Heart left ventricle (tissue), 16 donors: ENCODE measurements at regions of chr3 and their contacts with region 1.

Region 1: GRCh38 chr3:45043728-45044299 is 17.7 kb downstream of the CLEC3B start:
- DNase-seq: no peak
- ATAC-seq: peak in 2 of 4 donors; percentile 45 to 55
- H3K4me3 ChIP-seq: no peak overlapping the region
- H3K27ac ChIP-seq: peak overlapping the region in 1 of 12 donors; percentile 85
- H3K4me1 ChIP-seq: peaks cover 0 to 46% (median 0%) of the 10 kb centered on the region in 12 donors
- H3K27me3 ChIP-seq: no peaks in the 10 kb centered on the region
- CTCF ChIP-seq: no peak
- POLR2A ChIP-seq: no peak

Region 2: DNA sequence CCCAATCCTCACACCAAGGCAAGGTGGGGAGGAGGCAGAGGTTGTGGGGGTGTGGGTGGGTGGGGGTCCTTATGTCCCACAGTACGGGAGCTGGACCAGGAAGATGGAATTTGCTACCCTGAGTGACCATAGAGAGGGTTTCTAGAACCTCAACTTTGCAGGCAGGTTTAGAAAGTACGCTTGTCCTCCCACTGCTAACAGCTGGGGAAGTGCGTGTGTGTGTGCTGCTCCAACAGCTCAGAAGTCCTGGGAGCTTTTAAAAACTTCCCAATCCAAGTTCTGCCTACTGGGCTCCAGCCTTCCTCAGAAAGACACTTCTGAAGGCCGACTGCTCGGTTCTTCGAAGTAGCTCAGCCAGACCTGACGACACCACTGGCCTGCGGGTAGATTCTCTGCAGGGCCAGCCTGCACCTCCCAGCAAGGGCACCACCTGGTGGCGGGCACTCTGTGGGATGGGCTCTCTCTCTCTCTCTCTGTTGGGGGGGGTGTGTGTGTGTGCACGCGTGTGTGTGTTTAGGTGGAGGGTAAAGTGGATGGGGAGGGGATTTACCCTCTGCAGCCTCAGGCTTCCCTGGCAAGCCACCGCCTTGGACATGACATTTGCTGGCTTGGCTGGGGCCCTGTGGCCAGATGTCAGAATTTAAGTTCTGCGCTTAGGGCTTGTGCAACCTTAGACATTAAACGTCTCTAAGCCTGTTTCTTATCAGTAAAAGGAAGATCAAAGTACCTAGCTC is 166.7 kb after region 1 on chr3:
- intact Hi-C with region 1: loop called in 9 of 10 experiments (anchors 1 to 2 kb)
- DNase-seq: peak; percentile 77 to 91 (median 87)
- ATAC-seq: peak; percentile 81 to 98 (median 96)
- H3K4me3 ChIP-seq: no peak overlapping the region
- H3K27ac ChIP-seq: peak overlapping the region in 1 of 12 donors; percentile 69
- H3K4me1 ChIP-seq: peaks cover 0 to 9% (median 0%) of the 10 kb centered on the region in 12 donors
- H3K27me3 ChIP-seq: peaks cover 0 to 2% (median 0%) of the 10 kb centered on the region in 9 donors
- CTCF ChIP-seq: peak; percentile 48 to 77 (median 67)
- POLR2A ChIP-seq: no peak

Region 3: DNA sequence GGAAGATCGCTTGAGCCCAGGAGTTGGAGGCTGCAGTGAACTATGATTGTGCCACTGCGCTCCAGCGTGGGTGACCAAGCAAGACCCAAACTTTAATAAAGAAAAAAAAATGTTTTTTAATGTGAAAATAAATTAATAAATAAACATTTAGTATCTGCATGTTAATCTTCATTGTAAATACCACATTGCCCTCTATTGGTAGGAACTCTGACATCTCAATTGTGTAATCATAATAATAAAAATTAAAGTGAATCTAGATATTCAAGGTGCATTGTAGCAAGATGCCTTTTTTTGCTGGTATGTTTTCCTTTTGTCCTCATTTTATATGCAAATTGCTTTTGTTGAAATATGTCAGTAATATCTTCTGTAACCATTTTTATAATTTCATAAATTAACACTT is 455.7 kb after region 1 on chr3:
- intact Hi-C with region 1: loop called in 9 of 10 experiments (anchors 5 kb)
- DNase-seq: no peak
- ATAC-seq: no peak
- H3K4me3 ChIP-seq: no peak overlapping the region
- H3K27ac ChIP-seq: no peak overlapping the region
- H3K4me1 ChIP-seq: peaks cover 0 to 9% (median 0%) of the 10 kb centered on the region in 12 donors
- H3K27me3 ChIP-seq: no peaks in the 10 kb centered on the region
- CTCF ChIP-seq: peak in 11 of 12 donors; percentile 23 to 56 (median 39)
- POLR2A ChIP-seq: no peak

Region 4: DNA sequence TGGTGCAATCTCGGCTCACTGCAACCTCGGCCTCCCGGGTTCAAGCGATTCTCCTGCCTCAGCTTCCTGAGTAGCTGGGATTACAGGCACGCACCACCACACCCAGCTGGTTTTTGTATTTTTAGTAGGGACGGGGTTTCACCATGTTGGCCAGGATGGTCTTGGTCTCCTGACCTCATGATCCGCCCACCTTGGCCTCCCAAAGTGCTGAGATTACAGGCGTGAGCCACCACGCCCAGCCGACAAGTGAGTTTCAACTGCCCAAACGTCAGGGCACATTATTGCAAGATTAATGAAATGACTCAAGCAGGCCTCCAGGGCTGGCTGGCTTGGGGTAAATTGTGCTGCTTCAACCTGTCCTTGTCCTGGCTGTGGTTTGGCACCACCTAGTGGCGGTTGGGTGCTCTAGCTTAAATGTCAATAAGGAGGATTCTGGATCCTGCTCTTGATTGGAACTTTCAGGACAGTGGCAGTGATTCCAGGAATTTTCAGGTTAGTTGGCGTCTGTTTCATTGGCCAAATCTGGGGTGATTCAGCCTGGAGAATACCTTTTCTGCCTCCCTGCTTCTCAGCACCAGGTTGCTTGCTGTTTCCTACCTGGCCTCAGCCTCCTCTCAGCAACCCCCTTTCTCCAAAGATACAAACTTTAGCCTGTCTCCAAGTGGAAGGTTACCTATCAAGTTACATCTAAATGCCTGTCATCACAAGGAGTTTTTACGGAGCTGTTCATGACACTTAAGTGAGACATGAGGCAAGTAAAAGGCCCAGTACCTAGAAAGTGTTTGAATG is 613.0 kb after region 1 on chr3:
- intact Hi-C with region 1: loop called in 4 of 10 experiments (anchors 10 kb)
- DNase-seq: peak; percentile 84 to 94 (median 93)
- ATAC-seq: peak; percentile 75 to 92 (median 88)
- H3K4me3 ChIP-seq: no peak overlapping the region
- H3K27ac ChIP-seq: peak overlapping the region in 2 of 12 donors; percentile 14 to 16
- H3K4me1 ChIP-seq: peaks cover 0 to 58% (median 41%) of the 10 kb centered on the region in 12 donors
- H3K27me3 ChIP-seq: no peaks in the 10 kb centered on the region
- CTCF ChIP-seq: peak; percentile 89 to 97 (median 93)
- POLR2A ChIP-seq: no peak